Heart right ventricle (tissue), 16 donors: ENCODE measurements at regions of chr13 and their contacts with region 1.

Region 1: GRCh38 chr13:99656092-99656745 is 154.9 kb downstream of the TM9SF2 start:
- DNase-seq: peak; percentile 41 to 81
- ATAC-seq: peak in 7 of 8 donors; percentile 63 to 79 (median 68)
- H3K4me3 ChIP-seq: no peak overlapping the region
- H3K27ac ChIP-seq: no peak overlapping the region
- H3K4me1 ChIP-seq: peaks cover 0 to 35% (median 14%) of the 10 kb centered on the region in 9 donors
- H3K27me3 ChIP-seq: peaks cover 0 to 40% (median 0%) of the 10 kb centered on the region in 7 donors
- CTCF ChIP-seq: peak; percentile 78 to 93 (median 90)

Region 2: GRCh38 chr13:99626461-99627082 is 29.6 kb before region 1 on chr13:
- intact Hi-C with region 1: no loop called
- DNase-seq: no peak
- ATAC-seq: peak in 4 of 8 donors; percentile 41 to 74 (median 54)
- H3K4me3 ChIP-seq: peak overlapping the region in 2 of 10 donors; percentile 4 to 8
- H3K27ac ChIP-seq: no peak overlapping the region
- H3K4me1 ChIP-seq: peaks cover 3 to 42% (median 15%) of the 10 kb centered on the region in 9 donors
- H3K27me3 ChIP-seq: no peaks in the 10 kb centered on the region
- CTCF ChIP-seq: no peak

Region 3: GRCh38 chr13:99908140-99908803 is 252.1 kb after region 1 on chr13:
- intact Hi-C with region 1: loop called in 5 of 10 experiments (anchors 10 kb)
- DNase-seq: no peak
- ATAC-seq: no peak
- H3K4me3 ChIP-seq: no peak overlapping the region
- H3K27ac ChIP-seq: no peak overlapping the region
- H3K4me1 ChIP-seq: peaks cover 0 to 5% (median 0%) of the 10 kb centered on the region in 9 donors
- H3K27me3 ChIP-seq: peaks cover 0 to 94% (median 83%) of the 10 kb centered on the region in 7 donors
- CTCF ChIP-seq: no peak

Region 4: GRCh38 chr13:99916366-99917103 is 260.3 kb after region 1 on chr13:
- intact Hi-C with region 1: loop called in 6 of 10 experiments (anchors 2 to 10 kb)
- DNase-seq: peak in 1 of 2 donors; percentile 19
- ATAC-seq: peak in 7 of 8 donors; percentile 51 to 70 (median 66)
- H3K4me3 ChIP-seq: no peak overlapping the region
- H3K27ac ChIP-seq: no peak overlapping the region
- H3K4me1 ChIP-seq: no peaks in the 10 kb centered on the region
- H3K27me3 ChIP-seq: peaks cover 0 to 52% (median 31%) of the 10 kb centered on the region in 7 donors
- CTCF ChIP-seq: peak; percentile 52 to 93 (median 82)

Region 5: GRCh38 chr13:100051070-100051469 is 394.9 kb after region 1 on chr13:
- intact Hi-C with region 1: no loop called
- DNase-seq: no peak
- ATAC-seq: no peak
- H3K4me3 ChIP-seq: no peak overlapping the region
- H3K27ac ChIP-seq: no peak overlapping the region
- H3K4me1 ChIP-seq: no peaks in the 10 kb centered on the region
- H3K27me3 ChIP-seq: peaks cover 0 to 8% (median 0%) of the 10 kb centered on the region in 7 donors
- CTCF ChIP-seq: no peak

Region 6: DNA sequence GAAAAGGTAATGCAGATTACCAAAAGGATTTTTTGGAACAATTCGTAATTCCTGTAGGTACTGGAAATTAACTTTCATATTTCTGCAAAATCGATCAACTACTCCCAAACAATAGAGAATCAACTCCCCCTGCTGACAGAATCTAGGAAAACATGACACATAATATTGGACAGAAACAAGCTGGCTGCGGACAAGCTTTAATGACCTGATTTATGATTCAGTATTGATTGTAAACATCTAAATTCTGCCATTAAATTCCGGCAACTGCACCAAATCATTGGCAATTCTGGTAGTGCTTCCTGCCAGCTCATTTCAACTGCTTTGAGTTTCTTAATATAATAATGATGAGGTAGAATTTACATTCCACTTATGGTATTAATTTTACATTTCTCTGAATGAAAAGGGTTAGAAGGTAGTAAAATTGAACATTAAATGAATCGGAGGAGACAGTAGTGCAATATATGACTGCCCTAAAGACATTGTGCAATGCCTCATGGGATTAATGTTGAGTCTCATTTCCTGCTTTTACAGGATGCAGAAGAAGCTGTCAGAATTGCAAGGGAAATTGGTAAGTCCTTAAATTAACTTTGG is 579.2 kb after region 1 on chr13:
- intact Hi-C with region 1: loop called (anchors 1 to 5 kb)
- DNase-seq: peak in 1 of 2 donors; percentile 31
- ATAC-seq: peak in 1 of 8 donors; percentile 41
- H3K4me3 ChIP-seq: no peak overlapping the region
- H3K27ac ChIP-seq: no peak overlapping the region
- H3K4me1 ChIP-seq: peaks cover 0 to 33% (median 26%) of the 10 kb centered on the region in 9 donors
- H3K27me3 ChIP-seq: no peaks in the 10 kb centered on the region
- CTCF ChIP-seq: peak; percentile 15 to 76 (median 66)

Region 7: DNA sequence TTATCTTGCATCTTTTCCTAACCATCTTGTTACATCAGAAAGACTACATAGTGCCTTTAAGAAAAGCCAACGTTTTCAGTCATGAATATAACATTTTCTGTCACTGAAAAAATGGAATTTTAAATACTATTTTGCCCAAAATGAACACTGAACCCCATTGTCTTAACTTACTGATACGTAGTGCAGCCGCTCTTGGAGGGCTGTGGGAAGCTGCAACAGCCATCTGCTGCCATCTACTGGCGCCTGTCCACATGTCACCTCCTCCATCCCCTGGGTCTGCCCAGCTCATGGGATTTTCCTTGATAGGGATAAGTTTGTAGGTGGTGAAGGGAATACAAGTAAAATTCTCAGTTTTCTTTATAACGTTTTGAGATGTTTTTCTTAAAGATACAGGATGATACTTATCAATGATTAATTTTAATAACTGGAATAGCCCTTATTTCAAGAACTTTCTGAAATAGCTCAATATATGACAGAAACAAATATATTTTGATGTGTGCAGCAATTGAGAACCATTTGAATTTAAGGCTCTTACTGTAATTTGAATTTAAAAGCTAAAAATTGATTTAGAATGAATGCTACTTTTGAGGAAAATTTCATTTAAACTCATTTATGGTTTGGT is 858.7 kb after region 1 on chr13:
- intact Hi-C with region 1: loop called in 9 of 10 experiments (anchors 1 to 10 kb)
- DNase-seq: peak; percentile 74 to 76
- ATAC-seq: peak; percentile 87 to 96 (median 91)
- H3K4me3 ChIP-seq: no peak overlapping the region
- H3K27ac ChIP-seq: no peak overlapping the region
- H3K4me1 ChIP-seq: peaks cover 0 to 25% (median 7%) of the 10 kb centered on the region in 9 donors
- H3K27me3 ChIP-seq: no peaks in the 10 kb centered on the region
- CTCF ChIP-seq: peak; percentile 86 to 99 (median 96)

Region 8: GRCh38 chr13:101098873-101099272 is 1442.7 kb after region 1 on chr13:
- intact Hi-C with region 1: loop called in 1 of 10 experiments (anchors 5 kb)
- DNase-seq: no peak
- ATAC-seq: peak in 1 of 8 donors; percentile 48
- H3K4me3 ChIP-seq: no peak overlapping the region
- H3K27ac ChIP-seq: no peak overlapping the region
- H3K4me1 ChIP-seq: no peaks in the 10 kb centered on the region
- H3K27me3 ChIP-seq: no peaks in the 10 kb centered on the region
- CTCF ChIP-seq: no peak

Region 9: DNA sequence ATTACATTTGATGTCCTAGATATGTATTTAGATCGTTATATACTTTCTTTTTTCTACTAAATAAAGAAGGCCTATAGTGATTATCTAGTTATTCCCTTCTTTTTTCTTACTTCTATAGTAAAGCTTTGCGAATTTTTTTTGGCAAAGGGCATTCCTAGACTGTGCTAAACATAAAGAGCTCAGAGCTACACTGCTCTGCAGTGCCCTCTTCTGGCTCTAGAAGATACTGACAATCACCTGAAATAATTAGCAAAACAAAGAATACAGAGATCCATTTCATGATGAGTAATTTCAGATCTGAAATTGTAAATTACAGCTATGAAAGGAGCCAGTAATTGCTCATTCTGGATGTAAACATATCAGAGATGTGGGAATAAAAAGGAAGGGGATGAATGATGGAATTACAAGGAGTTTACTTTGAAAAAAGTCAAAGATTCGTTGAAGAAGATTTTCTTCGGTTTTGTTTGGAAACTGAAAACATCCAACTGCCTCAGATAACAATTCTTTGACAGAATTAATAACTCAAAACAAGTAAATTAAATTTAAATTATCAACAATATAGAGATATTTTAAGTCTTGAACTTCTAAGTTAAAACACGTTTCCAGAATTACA is 1471.6 kb after region 1 on chr13:
- intact Hi-C with region 1: loop called in 3 of 10 experiments (anchors 10 kb)
- DNase-seq: no peak
- ATAC-seq: no peak
- H3K4me3 ChIP-seq: no peak overlapping the region
- H3K27ac ChIP-seq: no peak overlapping the region
- H3K4me1 ChIP-seq: no peaks in the 10 kb centered on the region
- H3K27me3 ChIP-seq: no peaks in the 10 kb centered on the region
- CTCF ChIP-seq: peak; percentile 39 to 82 (median 70)